KBM-7 (cell line): ENCODE measurements at regions of chr9 and their contacts with region 1.

Region 1: GRCh38 chr9:1979741-1980367 is 35.3 kb upstream of the SMARCA2 start:
- DNase-seq: peak; percentile 60

Region 2: DNA sequence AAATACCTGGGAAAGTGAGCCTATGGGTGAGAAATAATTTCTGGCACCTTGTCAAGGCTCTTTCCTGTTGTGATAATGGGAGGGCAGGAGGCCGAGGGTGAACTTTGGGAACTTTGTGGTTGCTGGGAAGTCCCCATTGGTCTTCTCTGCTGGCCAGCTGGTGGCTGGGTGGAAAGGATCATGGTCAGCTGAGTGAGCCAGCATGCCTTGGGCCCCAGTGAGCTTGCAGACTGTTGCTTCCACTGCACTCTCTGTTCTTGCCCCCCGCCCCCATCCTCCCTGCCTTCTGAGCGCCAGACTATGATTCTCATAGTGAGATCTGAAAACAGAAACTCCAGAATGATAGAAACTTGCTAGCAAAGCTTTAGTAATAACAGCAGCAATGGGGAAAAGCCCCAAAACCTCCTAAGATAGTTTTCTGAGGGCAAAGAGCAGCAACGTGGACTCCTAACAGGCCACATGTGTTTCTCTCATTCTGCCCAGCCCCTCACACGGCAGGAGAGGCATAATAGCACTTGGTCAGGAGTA is 103.9 kb before region 1 on chr9:
- in situ Hi-C with region 1: loop called (anchors 25 kb)
- DNase-seq: no peak

Region 3: DNA sequence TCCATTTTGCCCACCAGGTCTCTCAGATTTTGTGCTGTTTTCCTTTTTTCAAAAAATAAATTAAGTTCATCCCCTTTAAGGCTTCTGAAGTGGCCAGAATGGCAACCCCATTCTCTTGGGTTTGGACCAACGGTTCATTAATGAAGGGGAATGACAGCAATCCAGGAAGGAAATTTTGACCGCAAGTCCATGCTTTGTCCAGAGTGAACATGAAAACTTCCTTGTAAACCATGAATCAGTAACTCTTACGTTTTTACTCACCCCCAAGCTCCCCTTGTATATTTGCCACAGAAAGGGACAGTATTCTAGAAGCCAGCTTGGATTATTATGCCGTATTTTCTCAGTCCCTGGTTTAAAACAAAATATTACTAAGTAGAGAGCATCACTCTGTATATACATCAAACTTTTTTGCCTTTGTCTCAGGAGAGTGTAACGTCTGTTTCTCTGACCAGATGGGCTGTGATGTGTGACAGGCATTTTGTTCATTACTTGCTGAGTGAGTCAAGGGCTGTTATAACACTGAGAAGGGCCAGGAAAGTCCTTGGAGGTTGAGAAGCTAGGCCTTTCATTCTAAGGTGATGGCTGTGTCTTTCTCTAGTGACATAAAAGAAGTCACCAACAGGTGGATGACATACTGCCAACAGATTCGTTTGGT is 183.5 kb after region 1 on chr9:
- in situ Hi-C with region 1: no loop called
- DNase-seq: no peak

Region 4: DNA sequence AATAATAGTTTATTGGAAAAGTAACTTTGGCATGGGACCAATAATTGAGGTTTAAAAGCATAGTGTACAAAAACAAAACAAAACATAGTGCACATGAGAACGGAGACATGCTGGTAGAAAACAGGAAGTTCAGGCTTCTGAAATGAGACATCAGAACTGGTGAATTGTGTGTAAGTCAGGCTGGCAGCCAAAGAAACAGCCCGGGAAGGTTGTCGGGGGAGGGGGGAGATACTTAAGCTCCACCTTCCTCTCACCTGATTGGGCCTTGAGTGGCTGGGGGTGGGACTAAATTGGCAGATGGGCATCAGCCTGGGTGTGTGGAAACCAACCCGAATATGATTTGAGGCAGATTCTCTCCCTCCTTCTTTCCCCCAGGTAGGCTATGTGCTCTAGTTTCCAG is 291.6 kb after region 1 on chr9:
- in situ Hi-C with region 1: no loop called
- DNase-seq: peak; percentile 61